Heart right ventricle (tissue), 16 donors: ENCODE measurements at regions of chr6 and their contacts with region 1.

Region 1: DNA sequence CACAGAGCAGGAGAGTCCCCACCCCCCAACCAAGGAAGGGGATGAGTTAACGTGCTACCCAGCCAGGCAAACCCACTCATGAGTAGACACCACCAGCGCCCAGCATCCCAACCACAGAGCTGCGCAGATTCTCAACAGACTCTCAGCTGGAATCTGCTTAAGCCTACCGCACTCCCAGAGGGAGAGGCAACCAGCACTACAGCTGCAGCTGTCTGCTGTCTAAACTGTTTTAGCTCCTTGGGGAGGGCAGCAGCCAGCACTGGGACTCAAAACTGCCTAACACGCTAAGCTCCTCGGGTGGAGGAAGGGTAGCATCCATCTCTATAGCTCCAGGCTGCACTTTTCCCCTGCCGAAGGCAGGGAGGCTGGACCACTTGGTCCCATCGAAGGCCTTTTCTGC is 539.8 kb downstream of the EPHA7 start:
- DNase-seq: no peak
- ATAC-seq: no peak
- H3K4me3 ChIP-seq: no peak overlapping the region
- H3K27ac ChIP-seq: no peak overlapping the region
- H3K4me1 ChIP-seq: no peaks in the 10 kb centered on the region
- H3K27me3 ChIP-seq: no peaks in the 10 kb centered on the region
- CTCF ChIP-seq: no peak

Region 2: GRCh38 chr6:92826633-92827032 is 52.9 kb before region 1 on chr6:
- intact Hi-C with region 1: no loop called
- DNase-seq: no peak
- ATAC-seq: no peak
- H3K4me3 ChIP-seq: no peak overlapping the region
- H3K27ac ChIP-seq: no peak overlapping the region
- H3K4me1 ChIP-seq: no peaks in the 10 kb centered on the region
- H3K27me3 ChIP-seq: no peaks in the 10 kb centered on the region
- CTCF ChIP-seq: no peak

Region 3: DNA sequence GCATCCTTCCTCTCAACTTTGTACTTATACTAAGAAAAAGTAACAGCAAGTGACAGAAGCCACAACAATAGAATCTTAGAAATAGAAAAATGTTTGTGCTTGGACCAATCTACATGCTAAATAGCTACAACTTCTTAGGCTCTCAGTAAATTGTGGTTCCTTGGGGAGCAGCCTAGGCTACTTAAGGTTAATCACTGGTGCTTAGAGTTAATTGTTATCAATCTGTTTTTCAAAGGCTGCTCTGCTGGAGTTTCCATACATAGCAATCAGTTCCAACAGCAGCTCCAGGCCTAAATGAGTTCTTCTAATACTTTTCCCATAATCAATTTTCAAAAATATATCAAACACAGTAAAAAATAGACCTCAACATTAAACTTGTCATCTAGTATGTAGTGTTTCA is 31.5 kb before region 1 on chr6:
- intact Hi-C with region 1: loop called in 1 of 10 experiments (anchors 1 kb)
- DNase-seq: no peak
- ATAC-seq: no peak
- H3K4me3 ChIP-seq: no peak overlapping the region
- H3K27ac ChIP-seq: no peak overlapping the region
- H3K4me1 ChIP-seq: no peaks in the 10 kb centered on the region
- H3K27me3 ChIP-seq: no peaks in the 10 kb centered on the region
- CTCF ChIP-seq: no peak

Region 4: DNA sequence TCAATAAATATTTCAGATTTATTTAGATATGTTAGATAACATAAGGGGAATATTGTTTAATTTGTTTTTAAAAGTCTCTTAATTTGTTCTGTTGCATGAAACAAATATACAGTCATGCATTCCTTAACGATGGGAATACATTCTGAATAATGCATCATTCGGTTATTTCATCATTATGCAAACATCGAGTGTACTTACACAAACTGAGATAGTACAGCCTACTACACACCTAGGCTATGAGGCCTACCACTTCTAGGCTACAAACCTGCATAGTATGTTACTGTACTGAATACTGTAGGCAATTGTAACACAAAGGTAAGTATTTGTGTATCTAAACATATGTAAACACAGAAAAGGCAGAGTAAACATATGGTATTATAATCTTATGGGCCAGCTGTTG is 421.1 kb after region 1 on chr6:
- intact Hi-C with region 1: no loop called
- DNase-seq: no peak
- ATAC-seq: no peak
- H3K4me3 ChIP-seq: no peak overlapping the region
- H3K27ac ChIP-seq: no peak overlapping the region
- H3K4me1 ChIP-seq: no peaks in the 10 kb centered on the region
- H3K27me3 ChIP-seq: no peaks in the 10 kb centered on the region
- CTCF ChIP-seq: no peak

Region 5: GRCh38 chr6:93468291-93468690 is 588.8 kb after region 1 on chr6:
- intact Hi-C with region 1: loop called in 1 of 10 experiments (anchors 10 kb)
- DNase-seq: no peak
- ATAC-seq: no peak
- H3K4me3 ChIP-seq: no peak overlapping the region
- H3K27ac ChIP-seq: no peak overlapping the region
- H3K4me1 ChIP-seq: no peaks in the 10 kb centered on the region
- H3K27me3 ChIP-seq: no peaks in the 10 kb centered on the region
- CTCF ChIP-seq: no peak